Dorsolateral prefrontal cortex (tissue), 120 donors: ENCODE measurements at regions of chr4 and their contacts with region 1.

Region 1: DNA sequence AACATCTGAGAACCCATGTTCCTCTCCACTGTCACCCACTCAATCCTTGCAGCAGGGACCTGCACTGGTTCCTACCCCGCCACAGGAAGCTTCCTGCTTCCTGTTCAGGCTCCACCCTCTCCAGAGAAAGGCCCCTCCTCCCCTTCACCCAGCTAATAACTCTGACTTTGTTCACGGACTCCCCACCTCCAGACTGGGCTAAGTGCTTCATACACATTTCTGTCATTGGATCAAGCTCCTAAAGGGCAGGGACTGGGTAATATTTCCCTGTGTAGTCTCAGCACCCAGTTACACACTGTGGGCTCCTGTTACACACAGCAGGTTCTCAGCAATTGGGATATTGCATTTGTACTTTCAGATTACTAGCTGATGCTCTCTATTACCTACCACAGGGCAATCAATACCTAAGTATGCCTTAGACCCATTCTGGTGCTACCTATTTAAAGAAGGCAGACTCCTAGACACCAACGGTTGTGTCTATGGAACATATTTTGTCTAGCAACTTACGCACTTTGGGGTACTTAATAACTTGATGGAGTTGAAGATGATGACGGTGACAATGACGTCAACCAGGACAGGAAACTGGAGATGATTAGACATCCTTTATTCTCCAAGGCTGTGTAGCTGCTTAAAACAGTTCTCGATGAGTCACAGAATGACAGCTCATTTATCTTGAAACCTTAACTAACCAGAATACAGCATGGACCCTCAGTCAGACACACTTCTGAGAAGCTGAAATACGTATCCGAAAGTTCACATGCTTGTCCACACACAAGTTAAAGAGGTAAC is 58.1 kb downstream of the MAML3 start:
- DNase-seq: no peak
- H3K4me3 ChIP-seq: peak overlapping the region in 6 of 59 donors; percentile 1 to 44 (median 38)
- H3K27ac ChIP-seq: peak overlapping the region in 47 of 59 donors; percentile 3 to 85 (median 65)
- H3K27me3 ChIP-seq: no peaks in the 10 kb centered on the region
- CTCF ChIP-seq: no peak

Region 2: GRCh38 chr4:140049024-140049848 is 46.7 kb before region 1 on chr4:
- intact Hi-C with region 1: loop called in 1 of 2 experiments (anchors 5 kb)
- DNase-seq: peak in 9 of 10 donors; percentile 22 to 79 (median 58)
- H3K4me3 ChIP-seq: peak overlapping the region; percentile 8 to 68 (median 49)
- H3K27ac ChIP-seq: peak overlapping the region in 39 of 59 donors; percentile 0 to 78 (median 51)
- H3K27me3 ChIP-seq: no peaks in the 10 kb centered on the region
- CTCF ChIP-seq: peak in 33 of 56 donors; percentile 7 to 48 (median 24)

Region 3: DNA sequence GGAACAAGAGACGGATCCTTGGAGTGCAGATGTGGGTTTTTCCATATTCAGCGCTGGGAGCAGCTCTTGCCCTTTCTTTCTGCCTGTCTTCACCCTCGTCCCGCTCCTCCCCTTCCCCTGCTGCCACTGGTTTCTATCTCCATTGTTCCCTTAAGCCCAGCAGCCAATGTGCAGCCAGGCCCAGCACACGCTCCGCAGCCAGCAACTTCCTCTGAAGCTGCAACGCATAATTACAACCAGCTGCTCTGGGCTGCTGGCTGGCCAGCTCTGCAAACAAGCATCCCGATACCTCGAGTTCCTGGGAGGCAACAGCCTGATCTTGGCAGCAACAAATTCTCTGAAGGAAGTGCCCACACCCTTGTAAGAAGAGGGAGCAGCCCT is 141.7 kb after region 1 on chr4:
- intact Hi-C with region 1: loop called in 1 of 2 experiments (anchors 5 kb)
- DNase-seq: peak; percentile 48 to 80 (median 71)
- H3K4me3 ChIP-seq: peak overlapping the region in 54 of 59 donors; percentile 1 to 61 (median 36)
- H3K27ac ChIP-seq: peak overlapping the region; percentile 40 to 94 (median 84)
- H3K27me3 ChIP-seq: no peaks in the 10 kb centered on the region
- CTCF ChIP-seq: peak in 6 of 56 donors; percentile 8 to 31 (median 20)